Breast epithelium (tissue), 4 donors: ENCODE measurements at regions of chr19 and their contacts with region 1.

Region 1: GRCh38 chr19:49085020-49085867 is at the start of gene SNRNP70:
- DNase-seq: peak; percentile 98 to 99
- H3K4me3 ChIP-seq: peak within 1 kb of the TSS; percentile 86 to 94 (median 88)
- H3K27ac ChIP-seq: peak within 1 kb of the TSS; percentile 89 to 93
- H3K4me1 ChIP-seq: peaks cover 7 to 9% of the 10 kb centered on the region in 2 donors
- H3K27me3 ChIP-seq: no peaks in the 10 kb centered on the region
- CTCF ChIP-seq: peak in 1 of 3 donors; percentile 15
- POLR2A ChIP-seq: peak; percentile 96
- total RNA-seq, gene SNRNP70: 222 to 444 (median 316) TPM

Region 2: DNA sequence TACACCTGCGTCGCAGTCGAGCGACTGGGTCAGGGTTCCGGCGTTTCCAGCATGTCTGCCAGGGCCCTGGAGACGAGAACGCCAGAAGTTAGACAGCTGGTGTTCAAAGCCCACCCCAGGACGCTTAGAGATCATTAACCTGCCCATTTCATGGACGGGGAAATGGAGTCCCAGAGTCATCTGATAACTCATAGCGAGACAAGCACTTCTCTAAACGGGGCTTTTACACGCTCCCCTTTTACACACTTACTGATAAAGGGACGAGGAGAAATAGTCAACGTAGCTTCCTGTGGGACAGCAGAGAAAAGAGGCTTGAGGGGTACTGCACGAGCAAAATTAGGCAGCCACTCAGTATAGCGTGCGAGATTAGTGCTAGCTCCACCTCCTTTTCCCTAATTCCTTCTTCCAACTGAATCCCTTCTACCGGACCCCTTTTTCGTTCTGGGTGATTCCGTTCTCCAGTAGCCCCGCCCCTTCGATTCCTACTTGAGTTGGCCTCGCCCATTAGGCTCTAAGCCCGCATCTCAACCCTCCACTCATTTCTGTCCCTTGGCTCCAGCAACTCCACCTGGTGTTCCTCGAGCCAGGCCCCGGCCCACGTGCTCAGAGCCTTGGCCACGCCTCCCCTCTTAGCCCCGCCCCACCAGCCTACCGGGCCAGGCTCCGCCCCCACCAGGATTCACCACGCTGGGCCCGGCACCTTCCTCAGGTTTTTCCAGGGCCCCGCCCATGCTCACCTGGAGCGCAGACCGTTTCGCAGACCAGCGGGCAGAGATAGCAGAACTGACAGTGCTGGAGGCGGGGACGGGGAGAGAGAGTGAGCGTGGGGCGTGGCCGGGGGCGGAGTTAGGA is 66.2 kb after region 1 on chr19:
- intact Hi-C with region 1: loop called (anchors 1 kb)
- DNase-seq: peak; percentile 93 to 98
- H3K4me3 ChIP-seq: peak overlapping the region; percentile 68 to 81 (median 69)
- H3K27ac ChIP-seq: peak overlapping the region; percentile 60 to 91
- H3K4me1 ChIP-seq: peaks cover 5 to 9% of the 10 kb centered on the region in 2 donors
- H3K27me3 ChIP-seq: no peaks in the 10 kb centered on the region
- CTCF ChIP-seq: no peak
- POLR2A ChIP-seq: no peak

Region 3: DNA sequence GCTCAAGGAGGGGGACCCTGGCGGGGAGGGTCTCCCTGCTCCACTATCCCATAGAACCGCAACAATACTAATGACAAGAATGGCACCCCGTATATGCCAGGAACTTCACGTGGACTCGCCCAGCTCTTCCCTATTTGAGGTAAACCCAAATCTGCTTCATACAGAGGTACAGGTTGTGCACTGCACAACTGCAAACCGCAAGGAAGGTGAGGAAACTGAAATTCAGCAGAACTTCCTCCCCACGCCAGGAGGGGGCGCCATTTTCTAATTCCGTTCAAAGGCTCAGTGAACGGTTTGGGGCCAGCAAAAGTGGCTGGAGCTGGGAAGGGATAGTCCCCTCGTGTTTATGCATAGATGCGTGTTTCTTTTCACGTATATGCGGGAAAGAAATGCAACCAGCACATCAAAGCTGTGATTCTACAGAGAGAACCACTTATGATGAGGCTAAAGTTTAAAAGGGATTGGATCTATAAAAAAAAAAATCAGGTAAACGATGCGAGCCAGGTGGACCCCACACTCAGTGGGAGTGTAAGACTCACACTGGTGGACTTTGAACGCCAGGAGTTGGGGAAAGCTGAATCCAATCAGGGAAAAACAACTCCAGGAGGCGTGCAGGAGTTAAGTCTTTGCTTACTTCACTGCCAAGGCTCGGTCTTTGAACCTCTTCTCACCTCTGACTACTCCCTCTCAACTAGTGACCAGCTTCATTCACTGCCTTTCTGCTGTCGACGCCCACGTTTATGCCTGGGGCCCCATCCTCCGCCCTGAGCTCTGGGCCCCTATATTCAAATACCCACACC is 1584.3 kb after region 1 on chr19:
- intact Hi-C with region 1: no loop called
- DNase-seq: no peak
- H3K4me3 ChIP-seq: no peak overlapping the region
- H3K27ac ChIP-seq: no peak overlapping the region
- H3K4me1 ChIP-seq: peaks cover 0 to 8% of the 10 kb centered on the region in 2 donors
- H3K27me3 ChIP-seq: peaks cover 18 to 61% of the 10 kb centered on the region in 2 donors
- CTCF ChIP-seq: peak; percentile 48 to 50 (median 49)
- POLR2A ChIP-seq: no peak